Tibial artery (tissue), 4 donors: ENCODE measurements at regions of chr5 and their contacts with region 1.

Region 1: DNA sequence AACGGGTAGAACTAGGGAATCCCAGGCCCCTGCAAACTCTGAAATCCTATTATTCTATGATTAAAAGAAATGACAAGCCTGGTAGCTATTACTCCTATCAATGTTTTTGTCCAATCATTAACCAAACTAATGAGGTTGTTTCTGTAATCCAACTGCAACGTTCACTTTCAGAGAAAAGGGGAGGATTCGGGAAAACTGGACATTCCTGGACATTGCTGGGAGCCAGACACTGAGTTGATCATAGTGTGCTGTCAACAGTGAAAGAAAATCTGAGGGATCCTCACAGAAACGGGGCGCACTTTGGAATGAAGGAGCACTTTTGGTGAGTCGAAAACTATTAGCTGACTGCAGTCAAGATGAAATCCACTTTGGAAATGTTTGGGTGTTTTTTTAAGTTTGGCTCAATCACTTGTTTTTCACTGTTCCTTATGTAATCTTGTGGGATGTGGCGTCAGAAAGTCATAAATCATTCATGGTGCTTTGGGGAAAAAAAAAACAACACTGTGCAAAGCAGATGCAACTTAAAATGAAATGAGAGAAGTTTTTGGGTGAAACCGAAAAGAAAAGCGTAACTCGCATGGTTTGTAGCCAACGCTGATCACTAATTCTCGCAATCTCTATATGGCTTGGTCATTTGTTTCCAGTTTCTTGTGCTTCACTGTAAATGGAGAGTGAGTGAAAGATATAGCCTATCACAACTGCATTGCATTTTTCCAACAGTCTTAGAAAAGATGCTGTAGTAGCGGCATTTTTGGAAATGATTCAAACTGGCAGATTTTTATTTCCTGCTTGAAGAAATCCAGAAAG is 51.2 kb upstream of the ADRA1B start:
- DNase-seq: no peak
- H3K4me3 ChIP-seq: peak overlapping the region; percentile 26 to 39
- H3K27ac ChIP-seq: peak overlapping the region; percentile 46 to 60
- H3K4me1 ChIP-seq: peaks cover 0 to 60% (median 13%) of the 10 kb centered on the region in 4 donors
- H3K27me3 ChIP-seq: no peaks in the 10 kb centered on the region
- CTCF ChIP-seq: no peak

Region 2: DNA sequence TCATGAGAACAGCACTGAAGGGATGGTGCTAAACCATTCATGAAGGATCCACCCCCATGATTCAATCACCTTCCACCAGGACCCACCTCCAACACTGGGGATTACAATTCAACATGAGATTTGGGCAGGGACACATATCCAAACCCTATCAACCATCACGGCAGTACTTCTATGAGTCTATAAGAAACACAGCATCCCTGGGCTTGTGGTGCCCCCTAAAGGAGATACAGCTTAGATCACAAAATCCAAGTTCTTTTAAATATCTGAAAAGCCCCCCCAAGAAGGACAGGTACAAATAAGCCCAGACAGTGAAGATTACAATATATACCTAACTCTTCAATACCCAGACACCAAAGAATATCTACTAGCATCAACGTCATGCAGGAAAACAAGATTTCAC is 182.5 kb before region 1 on chr5:
- intact Hi-C with region 1: no loop called
- DNase-seq: no peak
- H3K4me3 ChIP-seq: no peak overlapping the region
- H3K27ac ChIP-seq: no peak overlapping the region
- H3K4me1 ChIP-seq: no peaks in the 10 kb centered on the region
- H3K27me3 ChIP-seq: no peaks in the 10 kb centered on the region
- CTCF ChIP-seq: no peak

Region 3: DNA sequence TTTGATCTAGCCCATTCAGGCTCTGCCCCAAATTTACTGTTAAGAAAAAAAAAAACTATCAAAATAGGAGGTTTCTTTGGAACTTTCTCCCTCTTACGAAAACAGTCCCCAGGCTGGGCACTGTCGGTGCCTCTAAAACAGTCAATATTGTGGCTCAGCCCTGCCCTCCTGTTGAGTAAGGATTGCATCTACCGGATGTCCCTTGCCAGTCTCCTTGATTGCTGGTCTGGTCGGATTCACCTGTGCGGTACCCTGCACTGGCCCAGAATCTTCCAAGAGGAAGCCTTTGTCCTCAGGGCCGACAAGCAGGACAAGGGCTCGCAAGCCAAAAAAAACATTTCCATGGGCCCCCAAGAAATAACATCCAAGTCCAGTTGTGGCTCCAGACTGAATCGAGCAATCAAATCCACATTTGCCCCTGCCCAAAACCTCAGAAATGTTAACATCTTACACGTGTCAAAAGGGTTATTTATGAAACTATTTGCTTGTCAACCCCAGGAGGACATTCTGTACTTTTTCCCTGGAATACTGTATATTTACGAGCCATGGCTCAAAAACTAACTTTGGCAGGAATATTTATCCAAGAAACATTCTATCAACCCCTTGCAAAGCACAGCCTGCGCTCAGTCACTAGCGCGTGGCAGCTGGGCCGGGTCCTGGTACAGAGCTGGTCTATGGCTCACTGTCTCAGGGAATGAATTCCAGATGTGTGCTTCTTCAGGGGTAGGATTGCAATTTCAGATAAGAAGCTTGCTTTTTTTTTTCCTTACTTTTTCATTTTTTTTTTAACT is 78.0 kb before region 1 on chr5:
- intact Hi-C with region 1: loop called (anchors 5 kb)
- DNase-seq: peak; percentile 88 to 91
- H3K4me3 ChIP-seq: no peak overlapping the region
- H3K27ac ChIP-seq: peak overlapping the region; percentile 88 to 95
- H3K4me1 ChIP-seq: peaks cover 0 to 80% (median 43%) of the 10 kb centered on the region in 4 donors
- H3K27me3 ChIP-seq: no peaks in the 10 kb centered on the region
- CTCF ChIP-seq: no peak

Region 4: DNA sequence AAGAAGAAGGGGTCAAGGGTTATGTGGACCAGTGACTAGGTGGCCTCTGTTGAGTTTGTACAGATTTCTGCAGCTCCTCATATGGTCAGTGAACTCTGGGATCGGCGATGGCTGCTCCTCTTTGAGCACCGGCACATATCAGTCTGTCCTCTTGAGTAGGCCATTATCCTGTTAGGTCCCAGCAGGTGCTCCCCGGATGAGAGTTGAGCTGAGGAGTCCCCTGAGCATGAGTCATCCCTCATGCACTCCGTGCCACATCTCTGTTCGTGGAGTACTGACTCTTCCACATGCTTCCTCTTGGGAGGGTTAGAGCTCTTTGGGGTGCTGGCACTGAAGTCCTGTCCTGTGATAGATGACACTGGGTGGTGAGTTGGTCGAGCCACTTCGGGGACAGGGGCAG is 700.3 kb after region 1 on chr5:
- intact Hi-C with region 1: no loop called
- DNase-seq: no peak
- H3K4me3 ChIP-seq: no peak overlapping the region
- H3K27ac ChIP-seq: no peak overlapping the region
- H3K4me1 ChIP-seq: no peaks in the 10 kb centered on the region
- H3K27me3 ChIP-seq: no peaks in the 10 kb centered on the region
- CTCF ChIP-seq: no peak